ENCODE measurements at regions of chr12 and their contacts with region 1.

Region 1: DNA sequence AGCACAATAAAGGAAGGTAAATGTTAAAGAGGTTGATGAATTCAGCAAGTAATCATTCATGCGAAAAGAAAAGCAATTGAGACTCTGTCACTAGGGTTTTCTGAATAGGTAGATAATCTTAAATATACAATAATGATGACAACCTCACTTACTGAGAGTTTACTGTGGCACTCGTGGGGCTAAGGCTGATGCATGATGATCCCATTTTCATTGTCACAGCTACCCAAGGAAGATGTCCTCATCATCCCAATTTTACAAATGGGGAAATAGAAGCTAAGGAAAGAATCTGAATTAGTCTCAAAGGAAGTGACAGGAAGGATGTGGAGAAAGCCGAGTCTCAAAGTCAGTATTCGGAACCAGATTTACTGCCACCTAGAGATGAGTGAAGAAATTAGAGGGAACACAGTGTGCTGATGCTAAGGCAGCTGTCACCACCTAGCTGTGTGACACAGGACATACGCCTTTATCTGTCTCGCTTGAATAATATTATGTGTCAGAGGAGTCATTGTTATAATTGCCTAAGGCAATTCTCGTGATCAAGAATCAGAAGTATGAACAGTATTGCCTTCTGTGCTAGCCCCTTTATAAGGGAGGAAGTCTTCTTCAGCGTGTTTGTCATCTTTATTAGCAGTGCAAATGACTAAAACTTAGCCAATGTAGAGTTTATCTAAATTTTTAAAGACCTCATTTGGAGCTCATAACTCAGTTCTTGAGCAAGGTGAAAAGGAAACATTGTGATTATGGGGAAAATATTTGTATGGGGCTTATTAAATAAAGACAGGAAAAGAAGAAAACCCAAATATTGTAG is 63.2 kb downstream of the ERGIC2 start:
- DNase-seq: peak; percentile 83
- H3K4me3 Mint-ChIP-seq: no peak overlapping the region
- H3K27ac Mint-ChIP-seq: no peak overlapping the region
- H3K4me1 Mint-ChIP-seq: peaks cover 8% of the 10 kb centered on the region
- H3K27me3 Mint-ChIP-seq: no peaks in the 10 kb centered on the region

Region 2: DNA sequence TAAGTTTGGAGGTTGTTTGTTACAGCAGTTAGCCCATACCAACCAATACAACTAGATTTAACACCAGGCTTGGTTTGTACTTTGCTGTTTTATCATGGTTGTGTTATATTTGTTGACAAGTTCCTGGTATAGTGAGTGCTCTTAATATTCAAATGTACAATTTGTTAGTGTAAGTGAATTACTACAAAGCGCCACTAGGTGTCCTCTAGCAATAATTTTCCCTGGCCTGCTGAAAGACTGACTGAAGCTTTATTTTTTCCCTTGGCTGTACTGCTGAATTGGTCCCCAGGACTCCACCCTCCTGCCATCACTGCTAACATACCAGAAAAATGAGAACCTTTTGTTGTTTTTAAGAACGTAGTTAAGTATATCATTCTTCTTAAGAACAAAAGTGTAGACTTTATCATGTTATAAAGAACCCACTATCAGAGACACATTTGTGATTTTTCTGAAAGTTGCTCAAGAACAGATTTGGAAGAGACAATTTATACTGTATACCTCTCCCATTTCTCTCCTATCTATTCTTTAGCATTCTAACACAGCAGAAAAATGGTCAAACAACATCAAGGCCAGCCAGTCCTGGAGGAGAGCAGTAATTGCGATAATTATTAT is 244.0 kb before region 1 on chr12:
- intact Hi-C with region 1: loop called (anchors 1 kb)
- DNase-seq: peak; percentile 68
- H3K4me3 Mint-ChIP-seq: no peak overlapping the region
- H3K27ac Mint-ChIP-seq: no peak overlapping the region
- H3K4me1 Mint-ChIP-seq: no peaks in the 10 kb centered on the region
- H3K27me3 Mint-ChIP-seq: peaks cover 23% of the 10 kb centered on the region

Region 3: DNA sequence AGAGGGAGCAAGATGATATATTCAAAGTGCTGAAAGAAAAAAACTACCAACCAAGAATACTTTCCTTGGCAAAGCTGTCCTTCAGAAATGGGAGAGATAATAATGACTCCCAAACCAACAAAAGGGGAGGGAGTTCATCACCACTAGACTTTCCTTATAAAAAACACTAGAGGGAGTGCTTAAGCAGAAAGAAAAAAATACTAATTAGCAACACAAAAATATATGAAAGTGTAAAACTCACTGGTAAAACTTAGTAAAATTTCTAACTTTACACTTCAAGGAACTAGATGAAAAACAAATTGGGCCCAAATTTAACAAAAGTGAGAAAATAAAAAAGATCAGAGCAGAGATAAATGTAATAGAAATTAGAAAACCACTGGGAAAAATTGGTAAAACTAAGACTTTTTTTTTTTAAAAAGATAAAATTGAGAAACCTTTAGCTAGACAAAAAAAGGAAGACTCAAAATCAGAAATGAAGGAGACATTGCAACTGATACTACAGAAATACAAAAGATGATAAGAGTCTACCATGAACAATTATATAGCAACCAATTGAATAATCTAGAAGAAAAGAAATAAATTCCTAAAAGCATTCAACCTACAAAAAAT is 229.0 kb before region 1 on chr12:
- intact Hi-C with region 1: loop called (anchors 1 kb)
- DNase-seq: no peak
- H3K4me3 Mint-ChIP-seq: no peak overlapping the region
- H3K27ac Mint-ChIP-seq: no peak overlapping the region
- H3K4me1 Mint-ChIP-seq: peaks cover 2% of the 10 kb centered on the region
- H3K27me3 Mint-ChIP-seq: peaks cover 46% of the 10 kb centered on the region

Region 4: GRCh38 chr12:29187756-29188155 is 130.0 kb before region 1 on chr12:
- intact Hi-C with region 1: no loop called
- DNase-seq: no peak
- H3K4me3 Mint-ChIP-seq: no peak overlapping the region
- H3K27ac Mint-ChIP-seq: no peak overlapping the region
- H3K4me1 Mint-ChIP-seq: no peaks in the 10 kb centered on the region
- H3K27me3 Mint-ChIP-seq: peaks cover 3% of the 10 kb centered on the region

Measured in activated CD4-positive, alpha-beta T cell treated with anti-CD3 and anti-CD28 coated beads, Interleukin-2, amount 10 ng/mL, durations not matched to agents 24 days and 14 days (primary cell).